Head of caudate nucleus (tissue), 42 donors: ENCODE measurements at regions of chr2 and their contacts with region 1.

Region 1: DNA sequence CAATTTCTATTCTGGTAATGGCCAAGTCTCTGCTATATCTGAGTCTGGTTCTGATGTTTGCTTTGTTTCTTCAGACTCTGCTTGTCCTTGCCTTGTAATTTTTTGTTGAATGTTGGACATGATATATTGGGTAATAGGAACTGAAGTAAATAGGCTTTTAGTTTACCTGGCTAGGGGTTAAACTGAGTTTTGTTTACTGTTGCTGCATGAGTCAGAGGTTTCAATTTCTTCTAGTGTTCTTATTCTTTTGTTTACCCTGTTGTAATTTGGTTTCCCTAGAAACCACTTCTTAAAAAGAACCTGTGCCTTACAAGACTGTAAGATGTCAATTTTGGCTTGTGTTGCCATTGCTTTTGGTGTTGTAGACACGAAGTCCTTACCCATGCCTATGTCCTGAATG is 285.0 kb upstream of the KCNH7 start:
- DNase-seq: no peak

Region 2: GRCh38 chr2:162908567-162908966 is 215.0 kb before region 1 on chr2:
- intact Hi-C with region 1: loop called (anchors 10 kb)
- DNase-seq: no peak